ENCODE measurements at regions of chr7 and their contacts with region 1.

Region 1: GRCh38 chr7:35985126-35985754 is 167.8 kb upstream of the EEPD1 start:
- DNase-seq: peak; percentile 63 to 86 (median 78)
- ATAC-seq: peak; percentile 100
- H3K4me3 ChIP-seq: no peak overlapping the region
- H3K4me3 Mint-ChIP-seq: no peak overlapping the region
- H3K27ac ChIP-seq: no peak overlapping the region
- H3K27ac Mint-ChIP-seq: no peak overlapping the region
- H3K4me1 ChIP-seq: no peaks in the 10 kb centered on the region
- H3K4me1 Mint-ChIP-seq: no peaks in the 10 kb centered on the region
- H3K27me3 ChIP-seq: no peaks in the 10 kb centered on the region
- H3K27me3 Mint-ChIP-seq: no peaks in the 10 kb centered on the region
- CTCF ChIP-seq: peak; percentile 82

Region 2: DNA sequence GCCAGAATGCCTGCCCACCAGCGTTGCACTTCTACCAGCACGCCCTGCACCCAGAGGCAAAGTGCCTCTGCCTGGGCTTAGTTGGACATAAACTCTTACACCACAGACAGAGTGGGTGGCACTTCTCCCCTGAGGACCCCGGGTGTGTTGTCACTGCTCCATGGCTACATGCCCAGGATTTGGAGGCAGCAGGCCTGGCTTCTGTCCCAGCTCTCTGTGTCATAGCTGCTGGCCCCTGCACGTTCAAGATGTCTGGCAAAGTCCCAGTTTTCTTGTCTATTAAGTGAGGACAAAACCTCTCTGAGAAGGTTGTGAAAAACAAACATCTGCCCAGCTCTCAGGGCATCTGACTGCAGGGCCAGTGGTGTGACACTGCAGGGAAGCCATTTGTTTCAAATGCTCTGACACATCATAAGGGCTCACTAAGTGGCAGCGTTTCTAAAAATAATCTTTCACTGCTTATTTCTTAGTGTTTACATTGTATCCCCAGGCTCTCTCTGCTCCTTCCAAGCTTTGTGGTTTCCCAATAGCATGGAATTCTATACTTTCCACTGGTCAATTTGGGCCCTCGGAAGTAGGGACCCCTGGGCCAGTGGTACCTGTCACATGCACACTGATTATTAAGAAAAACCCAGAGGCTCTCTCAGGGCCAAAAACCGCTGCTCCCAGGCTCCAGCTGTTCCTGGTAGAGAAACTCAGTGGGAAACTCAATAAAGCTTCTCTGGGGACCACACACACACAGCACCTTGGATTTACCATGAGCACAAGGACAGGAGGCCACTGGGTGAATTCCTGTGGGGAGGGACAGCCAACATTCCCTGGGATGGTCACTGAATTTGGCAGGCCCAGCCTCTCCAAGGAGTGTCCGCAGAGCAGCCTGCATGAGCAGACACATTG is 318.2 kb after region 1 on chr7:
- CTCF ChIA-PET with region 1: interaction called, 13 read pairs
- POLR2A ChIA-PET with region 1: no interaction called
- intact Hi-C with region 1: no loop called
- DNase-seq: no peak
- ATAC-seq: no peak
- H3K4me3 ChIP-seq: no peak overlapping the region
- H3K4me3 Mint-ChIP-seq: no peak overlapping the region
- H3K27ac ChIP-seq: no peak overlapping the region
- H3K27ac Mint-ChIP-seq: no peak overlapping the region
- H3K4me1 ChIP-seq: no peaks in the 10 kb centered on the region
- H3K4me1 Mint-ChIP-seq: no peaks in the 10 kb centered on the region
- H3K27me3 ChIP-seq: no peaks in the 10 kb centered on the region
- H3K27me3 Mint-ChIP-seq: no peaks in the 10 kb centered on the region
- CTCF ChIP-seq: no peak

Measured in CD8-positive, alpha-beta T cell (primary cell).